Heart right ventricle (tissue), 16 donors: ENCODE measurements at regions of chr1 and their contacts with region 1.

Region 1: DNA sequence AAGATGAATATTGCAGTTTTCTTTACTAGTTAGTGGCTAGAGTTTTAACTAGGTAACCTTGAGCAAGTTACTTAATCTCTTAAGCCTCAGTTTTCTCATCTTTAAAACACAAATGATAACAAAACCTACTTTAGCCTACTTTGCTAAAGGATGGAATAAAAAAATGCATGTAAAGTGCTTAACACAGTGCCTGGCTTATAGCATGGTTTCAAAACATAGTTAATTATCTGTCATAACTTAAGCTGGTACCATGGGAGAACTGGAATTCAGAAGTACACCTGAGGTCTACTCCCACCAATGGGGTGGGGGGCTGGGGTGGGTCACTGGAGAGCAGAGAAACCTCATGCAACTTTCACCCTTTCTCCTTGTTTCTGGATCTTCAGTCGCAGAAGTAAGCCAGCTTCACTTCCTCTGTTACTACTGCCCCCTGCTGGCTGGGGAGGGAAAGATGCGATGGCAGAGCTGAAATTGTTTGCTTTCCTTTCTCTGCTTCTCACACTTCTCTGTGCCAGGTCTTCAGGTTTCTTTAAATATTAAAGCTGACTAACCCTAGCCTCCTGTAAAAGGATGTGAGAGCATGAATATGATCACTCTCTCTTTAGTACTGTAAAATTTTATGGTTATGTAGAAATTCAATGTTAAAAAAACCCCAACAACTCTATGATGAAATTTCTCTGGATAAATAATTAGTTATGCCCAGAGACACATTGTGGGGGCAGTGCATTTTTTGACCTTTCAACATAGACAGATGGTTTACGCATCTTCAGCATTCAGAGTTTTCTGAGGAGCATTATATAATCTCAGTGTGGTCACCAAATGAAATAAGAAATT is 324.2 kb downstream of the HLX start:
- DNase-seq: peak; percentile 74 to 85
- ATAC-seq: peak; percentile 44 to 85 (median 74)
- H3K4me3 ChIP-seq: no peak overlapping the region
- H3K27ac ChIP-seq: peak overlapping the region in 9 of 10 donors; percentile 6 to 64 (median 49)
- H3K4me1 ChIP-seq: peaks cover 0 to 37% (median 25%) of the 10 kb centered on the region in 9 donors
- H3K27me3 ChIP-seq: no peaks in the 10 kb centered on the region
- CTCF ChIP-seq: peak; percentile 78 to 94 (median 92)

Region 2: GRCh38 chr1:220810179-220810653 is 393.2 kb before region 1 on chr1:
- intact Hi-C with region 1: loop called in 4 of 10 experiments (anchors 5 to 10 kb)
- DNase-seq: peak; percentile 79
- ATAC-seq: peak; percentile 79 to 93 (median 87)
- H3K4me3 ChIP-seq: peak overlapping the region in 8 of 10 donors; percentile 18 to 42 (median 34)
- H3K27ac ChIP-seq: peak overlapping the region in 2 of 10 donors; percentile 21 to 33
- H3K4me1 ChIP-seq: peaks cover 4 to 15% (median 12%) of the 10 kb centered on the region in 9 donors
- H3K27me3 ChIP-seq: no peaks in the 10 kb centered on the region
- CTCF ChIP-seq: peak; percentile 83 to 96 (median 95)

Region 3: GRCh38 chr1:220894025-220894923 is 309.2 kb before region 1 on chr1:
- intact Hi-C with region 1: loop called in 2 of 10 experiments (anchors 10 kb)
- DNase-seq: no peak
- ATAC-seq: peak in 6 of 8 donors; percentile 36 to 57 (median 42)
- H3K4me3 ChIP-seq: peak overlapping the region; percentile 1 to 48 (median 46)
- H3K27ac ChIP-seq: no peak overlapping the region
- H3K4me1 ChIP-seq: peaks cover 0 to 28% (median 13%) of the 10 kb centered on the region in 9 donors
- H3K27me3 ChIP-seq: peaks cover 31 to 75% (median 72%) of the 10 kb centered on the region in 7 donors
- CTCF ChIP-seq: no peak

Region 4: GRCh38 chr1:221069178-221069903 is 134.1 kb before region 1 on chr1:
- intact Hi-C with region 1: no loop called
- DNase-seq: no peak
- ATAC-seq: no peak
- H3K4me3 ChIP-seq: no peak overlapping the region
- H3K27ac ChIP-seq: peak overlapping the region in 1 of 10 donors; percentile 49
- H3K4me1 ChIP-seq: peaks cover 0 to 58% (median 0%) of the 10 kb centered on the region in 9 donors
- H3K27me3 ChIP-seq: no peaks in the 10 kb centered on the region
- CTCF ChIP-seq: no peak

Region 5: DNA sequence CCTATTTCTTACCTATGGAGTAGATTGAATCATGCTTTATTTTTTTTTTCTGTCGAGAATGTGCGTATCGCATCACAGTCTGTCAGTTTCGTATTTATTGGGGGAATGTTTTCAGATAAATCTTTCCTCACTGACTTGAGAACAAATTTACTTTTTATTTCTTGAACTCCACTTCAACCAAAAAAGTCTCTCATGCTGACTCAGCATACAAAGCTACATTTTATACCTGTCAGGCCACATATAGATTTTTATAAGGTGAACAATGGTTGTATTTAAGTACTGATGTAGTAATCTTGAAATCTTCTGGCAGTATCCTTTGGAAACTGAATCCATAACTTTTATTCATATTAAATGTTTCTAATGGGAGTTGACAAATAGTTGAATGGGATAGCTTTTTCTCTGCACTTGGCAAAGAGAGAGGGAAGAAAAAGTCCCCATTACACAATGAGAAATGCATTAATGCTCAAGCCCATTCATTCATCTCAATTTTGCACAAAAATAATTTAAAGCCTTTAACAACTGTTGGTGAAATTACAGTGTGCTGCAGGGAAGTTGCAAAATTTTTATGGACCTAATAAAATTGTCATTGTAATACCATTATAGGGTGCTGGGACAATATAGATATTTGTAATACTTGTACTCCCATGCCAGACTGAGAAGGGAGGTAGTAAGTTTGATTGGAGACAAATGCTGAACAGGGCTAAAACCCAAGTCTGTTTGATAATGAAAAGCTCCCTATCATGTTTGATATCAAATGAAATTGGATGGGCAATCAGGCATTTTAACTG is 43.4 kb after region 1 on chr1:
- intact Hi-C with region 1: loop called in 1 of 10 experiments (anchors 2 kb)
- DNase-seq: no peak
- ATAC-seq: no peak
- H3K4me3 ChIP-seq: no peak overlapping the region
- H3K27ac ChIP-seq: no peak overlapping the region
- H3K4me1 ChIP-seq: peaks cover 0 to 3% (median 0%) of the 10 kb centered on the region in 9 donors
- H3K27me3 ChIP-seq: no peaks in the 10 kb centered on the region
- CTCF ChIP-seq: no peak